GM12878 (cell line): ENCODE measurements at regions of chr5 and their contacts with region 1.

Region 1: GRCh38 chr5:150092159-150092787 is 5.9 kb upstream of the CSF1R start:
- DNase-seq: no peak
- ATAC-seq: peak; percentile 95
- H3K4me3 ChIP-seq: peak overlapping the region; percentile 47; the same call in 1 of the 2 replicates
- H3K27ac ChIP-seq: no peak overlapping the region
- H3K4me1 ChIP-seq: peaks cover 9% of the 10 kb centered on the region
- H3K27me3 ChIP-seq: no peaks in the 10 kb centered on the region
- CTCF ChIP-seq: no peak
- EP300 ChIP-seq: no peak
- POLR2A ChIP-seq: no peak
- RAD21 ChIP-seq: no peak

Region 2: GRCh38 chr5:149935431-149935901 is 156.8 kb before region 1 on chr5:
- CTCF ChIA-PET with region 1: no interaction called
- POLR2A ChIA-PET with region 1: interaction called, 10 read pairs
- RAD21 ChIA-PET with region 1: no interaction called
- SMC1A ChIA-PET with region 1: no interaction called
- in situ Hi-C with region 1: no loop called
- intact Hi-C with region 1: no loop called
- DNase-seq: no peak
- ATAC-seq: no peak
- H3K4me3 ChIP-seq: no peak overlapping the region
- H3K27ac ChIP-seq: no peak overlapping the region
- H3K4me1 ChIP-seq: no peaks in the 10 kb centered on the region
- H3K27me3 ChIP-seq: peaks cover 0 to 2% of the 10 kb centered on the region in 2 experiments; a peak in 3 of 4 replicates
- CTCF ChIP-seq: no peak
- EP300 ChIP-seq: no peak
- POLR2A ChIP-seq: no peak
- RAD21 ChIP-seq: no peak

Region 3: GRCh38 chr5:150138551-150139265 is 46.4 kb after region 1 on chr5:
- CTCF ChIA-PET with region 1: no interaction called
- POLR2A ChIA-PET with region 1: no interaction called
- RAD21 ChIA-PET with region 1: no interaction called
- SMC1A ChIA-PET with region 1: no interaction called
- in situ Hi-C with region 1: no loop called
- intact Hi-C with region 1: no loop called
- DNase-seq: no peak
- ATAC-seq: no peak
- H3K4me3 ChIP-seq: no peak overlapping the region
- H3K27ac ChIP-seq: no peak overlapping the region
- H3K4me1 ChIP-seq: no peaks in the 10 kb centered on the region
- H3K27me3 ChIP-seq: no peaks in the 10 kb centered on the region
- CTCF ChIP-seq: no peak
- EP300 ChIP-seq: no peak
- POLR2A ChIP-seq: no peak
- RAD21 ChIP-seq: no peak